MCF 10A (cell line): ENCODE measurements at regions of chr1 and their contacts with region 1.

Region 1: DNA sequence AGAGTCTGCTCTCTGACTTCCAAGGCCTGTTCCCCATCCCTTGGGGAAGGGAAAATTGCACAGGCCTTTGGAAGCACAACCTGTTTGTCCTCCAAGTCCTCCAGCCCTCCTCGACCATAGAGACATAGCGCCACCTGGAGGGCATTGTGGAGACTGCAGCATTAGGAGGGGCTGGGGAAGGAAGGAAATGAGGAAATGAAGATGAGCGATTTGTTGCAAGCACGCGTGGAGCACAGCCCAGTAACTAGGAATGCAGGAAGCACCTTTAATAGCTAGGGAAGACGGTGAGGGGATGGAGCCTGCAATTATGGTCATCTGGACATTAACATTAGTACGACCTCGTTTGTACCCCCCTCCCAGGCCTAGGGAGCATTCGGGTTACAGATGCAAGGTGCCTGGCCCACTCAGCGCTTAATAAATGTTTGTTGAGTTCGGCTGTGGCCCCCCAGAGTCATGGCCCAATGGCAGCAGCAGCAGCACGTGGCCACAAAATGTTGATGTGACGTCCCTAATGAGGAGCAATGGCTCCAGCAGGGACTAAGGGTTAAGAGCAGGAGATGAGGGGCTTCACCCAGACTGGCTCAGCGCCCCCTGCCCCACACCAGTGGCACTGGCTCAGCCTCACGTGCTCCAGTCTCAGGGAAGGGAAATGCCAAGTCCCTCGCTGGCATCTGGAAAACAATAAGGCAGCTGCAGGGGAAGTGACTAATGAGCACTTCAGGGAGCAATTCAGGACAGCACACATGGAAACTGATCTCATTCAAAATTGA is 8.0 kb upstream of the CAMK2N1 start:
- DNase-seq: peak; percentile 91
- H3K4me3 Mint-ChIP-seq: no peak overlapping the region
- H3K27ac Mint-ChIP-seq: no peak overlapping the region
- H3K4me1 Mint-ChIP-seq: peaks cover 29% of the 10 kb centered on the region
- H3K27me3 Mint-ChIP-seq: no peaks in the 10 kb centered on the region
- CTCF ChIP-seq: peak; percentile 94

Region 2: GRCh38 chr1:19974822-19975416 is 519.1 kb before region 1 on chr1:
- CTCF ChIA-PET with region 1: interaction called, 11 read pairs
- POLR2A ChIA-PET with region 1: interaction called, 3 read pairs
- intact Hi-C with region 1: no loop called
- DNase-seq: peak; percentile 67
- H3K4me3 Mint-ChIP-seq: no peak overlapping the region
- H3K27ac Mint-ChIP-seq: no peak overlapping the region
- H3K4me1 Mint-ChIP-seq: peaks cover 4% of the 10 kb centered on the region
- H3K27me3 Mint-ChIP-seq: peaks cover 34% of the 10 kb centered on the region
- CTCF ChIP-seq: peak; percentile 83

Region 3: GRCh38 chr1:20165522-20165951 is 328.5 kb before region 1 on chr1:
- CTCF ChIA-PET with region 1: interaction called, 7 read pairs
- POLR2A ChIA-PET with region 1: interaction called, 3 read pairs
- intact Hi-C with region 1: loop called (anchors 10 kb)
- DNase-seq: peak; percentile 46
- H3K4me3 Mint-ChIP-seq: no peak overlapping the region
- H3K27ac Mint-ChIP-seq: no peak overlapping the region
- H3K4me1 Mint-ChIP-seq: peaks cover 16% of the 10 kb centered on the region
- H3K27me3 Mint-ChIP-seq: no peaks in the 10 kb centered on the region
- CTCF ChIP-seq: peak; percentile 29

Region 4: DNA sequence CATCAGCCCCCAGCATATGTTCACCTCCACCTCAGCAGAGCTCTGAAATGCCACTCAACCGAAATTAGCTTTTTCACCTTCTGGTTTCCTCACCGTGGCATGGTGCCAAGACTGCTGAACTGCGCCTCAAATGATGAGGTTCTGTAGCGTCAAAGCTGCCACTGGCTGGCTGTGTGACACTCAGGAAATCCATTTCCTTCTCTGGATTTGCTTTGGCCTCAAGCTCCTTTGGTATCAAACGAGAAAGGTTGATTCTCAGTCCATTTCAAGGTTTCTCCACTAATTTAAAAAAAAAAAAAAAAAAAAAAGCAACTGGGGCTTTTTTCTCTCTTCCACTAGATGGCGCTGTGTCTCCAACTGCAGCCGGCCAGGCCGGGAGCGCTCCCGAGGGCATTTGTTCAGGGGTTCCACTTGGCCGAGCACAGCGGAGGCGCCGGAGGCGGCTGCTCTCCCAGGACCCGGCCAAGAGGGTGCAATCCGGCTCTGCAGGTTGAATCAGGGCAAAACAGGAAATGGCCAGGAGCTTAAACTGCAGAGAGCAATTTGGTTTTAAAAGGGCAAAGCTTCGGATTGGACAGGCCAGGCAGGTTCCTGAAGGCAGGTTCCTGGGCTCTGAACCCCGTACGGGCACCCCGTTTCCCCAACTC is 281.2 kb before region 1 on chr1:
- CTCF ChIA-PET with region 1: interaction called, 69 read pairs
- POLR2A ChIA-PET with region 1: interaction called, 3 read pairs
- intact Hi-C with region 1: loop called (anchors 1 kb)
- DNase-seq: peak; percentile 87
- H3K4me3 Mint-ChIP-seq: no peak overlapping the region
- H3K27ac Mint-ChIP-seq: no peak overlapping the region
- H3K4me1 Mint-ChIP-seq: peaks cover 27% of the 10 kb centered on the region
- H3K27me3 Mint-ChIP-seq: no peaks in the 10 kb centered on the region
- CTCF ChIP-seq: peak; percentile 81

Region 5: GRCh38 chr1:20361806-20362640 is 132.0 kb before region 1 on chr1:
- CTCF ChIA-PET with region 1: interaction called, 8 read pairs
- POLR2A ChIA-PET with region 1: no interaction called
- intact Hi-C with region 1: loop called (anchors 1 kb)
- DNase-seq: peak; percentile 62
- H3K4me3 Mint-ChIP-seq: no peak overlapping the region
- H3K27ac Mint-ChIP-seq: no peak overlapping the region
- H3K4me1 Mint-ChIP-seq: peaks cover 13% of the 10 kb centered on the region
- H3K27me3 Mint-ChIP-seq: peaks cover 22% of the 10 kb centered on the region
- CTCF ChIP-seq: peak; percentile 85

Region 6: GRCh38 chr1:20430355-20431175 is 63.5 kb before region 1 on chr1:
- CTCF ChIA-PET with region 1: interaction called, 3 read pairs
- POLR2A ChIA-PET with region 1: no interaction called
- intact Hi-C with region 1: loop called (anchors 1 kb)
- DNase-seq: peak; percentile 43
- H3K4me3 Mint-ChIP-seq: no peak overlapping the region
- H3K27ac Mint-ChIP-seq: no peak overlapping the region
- H3K4me1 Mint-ChIP-seq: peaks cover 7% of the 10 kb centered on the region
- H3K27me3 Mint-ChIP-seq: peaks cover 2% of the 10 kb centered on the region
- CTCF ChIP-seq: peak; percentile 85